ENCODE measurements at regions of chr20 and their contacts with region 1.

Region 1: DNA sequence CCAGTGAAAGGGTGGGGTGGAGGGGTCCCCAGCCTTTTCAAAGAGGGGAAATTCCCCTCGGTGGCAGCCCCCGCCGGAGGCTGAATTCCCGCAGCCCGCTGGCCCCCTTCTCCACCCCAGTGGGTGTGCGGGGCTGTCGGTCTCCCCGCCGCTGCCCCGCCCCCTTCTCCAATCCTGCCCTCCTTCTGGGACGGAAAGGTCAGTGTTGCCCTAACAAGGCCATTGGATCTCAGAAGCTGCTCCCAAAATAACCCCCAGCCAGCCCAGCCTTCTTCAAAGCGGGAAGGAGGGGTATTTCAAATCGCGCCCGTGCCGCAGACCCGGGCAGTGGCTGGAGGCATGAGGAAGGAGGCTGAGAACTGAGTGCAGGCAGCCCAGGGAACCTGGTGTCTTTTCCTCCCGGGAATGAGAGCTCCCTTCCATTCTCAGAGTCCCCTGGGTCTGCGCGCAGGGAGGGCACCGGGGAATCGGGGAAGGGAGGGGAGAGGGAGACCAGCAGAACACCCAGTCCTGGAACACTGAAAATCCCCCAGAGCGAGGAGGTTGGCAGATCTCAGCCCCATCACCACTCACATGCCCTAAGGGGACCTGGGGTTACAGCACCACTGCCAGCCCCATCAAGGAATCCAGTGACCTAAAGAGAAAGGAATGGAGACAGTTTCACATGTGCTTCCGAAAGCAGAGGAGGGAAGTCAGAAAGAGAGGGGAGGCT is at the start of gene JPH2:
- DNase-seq: no peak
- ATAC-seq: peak in 1 of 3 donors; percentile 5
- H3K4me3 ChIP-seq: no peak within 1 kb of the TSS
- H3K4me3 Mint-ChIP-seq: no peak within 1 kb of the TSS
- H3K27ac ChIP-seq: no peak within 1 kb of the TSS
- H3K27ac Mint-ChIP-seq: no peak within 1 kb of the TSS
- H3K4me1 ChIP-seq: peaks cover 10% of the 10 kb centered on the region
- H3K4me1 Mint-ChIP-seq: no peaks in the 10 kb centered on the region
- H3K27me3 ChIP-seq: peaks cover 22% of the 10 kb centered on the region
- H3K27me3 Mint-ChIP-seq: peaks cover 35 to 51% of the 10 kb centered on the region in 2 donors
- CTCF ChIP-seq: no peak
- total RNA-seq, gene JPH2: not detected

Region 2: DNA sequence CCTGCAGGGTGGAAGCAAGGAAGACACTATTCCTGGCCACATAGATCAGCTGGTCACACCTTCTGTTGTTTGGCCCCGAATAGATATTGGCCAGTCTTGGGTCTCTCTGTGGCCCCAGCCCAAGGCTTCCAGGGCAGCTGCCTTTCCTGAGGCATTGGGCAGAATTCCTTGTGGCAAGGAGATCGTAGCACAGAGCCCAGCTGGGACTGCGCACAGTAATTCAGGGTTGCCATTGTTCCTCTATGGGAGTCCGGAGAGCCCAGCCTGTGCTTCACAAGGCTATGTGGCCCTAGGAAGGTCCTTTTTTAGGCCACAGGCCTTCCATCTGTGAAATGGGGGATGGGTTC is 621.5 kb before region 1 on chr20:
- intact Hi-C with region 1: no loop called
- DNase-seq: no peak
- ATAC-seq: no peak
- H3K4me3 ChIP-seq: no peak overlapping the region
- H3K4me3 Mint-ChIP-seq: no peak overlapping the region
- H3K27ac ChIP-seq: no peak overlapping the region
- H3K27ac Mint-ChIP-seq: no peak overlapping the region
- H3K4me1 ChIP-seq: no peaks in the 10 kb centered on the region
- H3K4me1 Mint-ChIP-seq: no peaks in the 10 kb centered on the region
- H3K27me3 ChIP-seq: no peaks in the 10 kb centered on the region
- H3K27me3 Mint-ChIP-seq: peaks cover 0 to 3% of the 10 kb centered on the region in 2 donors
- CTCF ChIP-seq: no peak

Region 3: DNA sequence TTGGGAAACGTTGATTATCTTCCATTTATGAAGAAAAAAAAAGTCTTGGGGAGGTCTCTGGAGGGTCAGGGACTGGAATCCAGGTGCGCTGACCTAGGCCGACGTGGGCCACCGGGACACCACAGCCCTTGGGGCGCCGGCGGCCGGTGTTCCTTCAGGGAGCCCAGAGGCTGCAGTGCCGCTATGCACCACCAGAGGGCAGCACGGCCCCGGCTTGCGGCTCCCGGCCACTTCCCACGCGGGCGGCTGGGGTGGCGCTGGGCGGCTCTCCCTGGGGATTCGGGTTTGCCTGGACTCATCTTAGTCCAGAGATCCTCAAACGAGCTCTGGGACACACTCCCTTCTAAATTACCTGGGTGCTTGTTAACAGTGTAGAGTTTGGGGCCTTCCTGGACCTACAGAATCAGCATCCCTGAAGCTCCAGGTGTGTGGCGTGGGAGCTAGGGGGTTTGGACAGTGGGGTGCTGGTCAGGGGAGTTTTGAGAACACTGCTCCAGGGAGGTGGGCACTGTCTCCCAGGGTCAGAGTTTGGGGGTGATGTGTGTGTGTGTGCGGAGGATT is 437.4 kb before region 1 on chr20:
- intact Hi-C with region 1: loop called (anchors 10 kb)
- DNase-seq: peak; percentile 85
- ATAC-seq: peak; percentile 66 to 79 (median 70)
- H3K4me3 ChIP-seq: no peak overlapping the region
- H3K4me3 Mint-ChIP-seq: no peak overlapping the region
- H3K27ac ChIP-seq: no peak overlapping the region
- H3K27ac Mint-ChIP-seq: no peak overlapping the region
- H3K4me1 ChIP-seq: peaks cover 36% of the 10 kb centered on the region
- H3K4me1 Mint-ChIP-seq: peaks cover 30 to 33% of the 10 kb centered on the region in 2 donors
- H3K27me3 ChIP-seq: peaks cover 26% of the 10 kb centered on the region
- H3K27me3 Mint-ChIP-seq: peaks cover 42 to 58% of the 10 kb centered on the region in 2 donors
- CTCF ChIP-seq: peak; percentile 99

Region 4: GRCh38 chr20:44115762-44116644 is 71.2 kb before region 1 on chr20:
- intact Hi-C with region 1: loop called (anchors 1 kb)
- DNase-seq: no peak
- ATAC-seq: no peak
- H3K4me3 ChIP-seq: no peak overlapping the region
- H3K4me3 Mint-ChIP-seq: no peak overlapping the region
- H3K27ac ChIP-seq: no peak overlapping the region
- H3K27ac Mint-ChIP-seq: no peak overlapping the region
- H3K4me1 ChIP-seq: no peaks in the 10 kb centered on the region
- H3K4me1 Mint-ChIP-seq: no peaks in the 10 kb centered on the region
- H3K27me3 ChIP-seq: no peaks in the 10 kb centered on the region
- H3K27me3 Mint-ChIP-seq: peaks cover 31 to 42% of the 10 kb centered on the region in 2 donors
- CTCF ChIP-seq: no peak

Region 5: DNA sequence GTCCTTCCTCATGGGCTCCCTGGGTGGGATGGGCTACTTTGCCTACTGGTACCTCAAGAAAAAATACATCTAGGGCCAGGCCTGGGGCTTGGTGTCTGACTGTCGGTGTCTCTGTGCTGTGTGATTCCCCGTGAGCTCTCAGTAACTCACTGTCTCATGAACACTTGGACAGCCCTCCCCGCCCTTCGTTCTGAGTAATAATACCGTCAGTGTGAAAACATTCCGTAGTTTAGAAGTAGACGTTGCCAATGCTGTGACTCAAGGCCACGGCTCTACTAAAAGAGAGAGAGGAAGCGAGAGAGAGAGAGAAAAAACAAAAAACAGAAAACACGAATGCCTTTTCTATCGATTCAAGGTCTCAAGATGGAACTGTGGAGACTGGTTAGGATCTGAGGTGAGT is 92.0 kb after region 1 on chr20:
- intact Hi-C with region 1: no loop called
- DNase-seq: no peak
- ATAC-seq: no peak
- H3K4me3 ChIP-seq: no peak overlapping the region
- H3K4me3 Mint-ChIP-seq: no peak overlapping the region
- H3K27ac ChIP-seq: no peak overlapping the region
- H3K27ac Mint-ChIP-seq: no peak overlapping the region
- H3K4me1 ChIP-seq: no peaks in the 10 kb centered on the region
- H3K4me1 Mint-ChIP-seq: peaks cover 0 to 5% of the 10 kb centered on the region in 2 donors
- H3K27me3 ChIP-seq: no peaks in the 10 kb centered on the region
- H3K27me3 Mint-ChIP-seq: no peaks in the 10 kb centered on the region
- CTCF ChIP-seq: no peak

Measured in natural killer cell (primary cell).